A673 (cell line): ENCODE measurements at regions of chr17 and their contacts with region 1.

Region 1: DNA sequence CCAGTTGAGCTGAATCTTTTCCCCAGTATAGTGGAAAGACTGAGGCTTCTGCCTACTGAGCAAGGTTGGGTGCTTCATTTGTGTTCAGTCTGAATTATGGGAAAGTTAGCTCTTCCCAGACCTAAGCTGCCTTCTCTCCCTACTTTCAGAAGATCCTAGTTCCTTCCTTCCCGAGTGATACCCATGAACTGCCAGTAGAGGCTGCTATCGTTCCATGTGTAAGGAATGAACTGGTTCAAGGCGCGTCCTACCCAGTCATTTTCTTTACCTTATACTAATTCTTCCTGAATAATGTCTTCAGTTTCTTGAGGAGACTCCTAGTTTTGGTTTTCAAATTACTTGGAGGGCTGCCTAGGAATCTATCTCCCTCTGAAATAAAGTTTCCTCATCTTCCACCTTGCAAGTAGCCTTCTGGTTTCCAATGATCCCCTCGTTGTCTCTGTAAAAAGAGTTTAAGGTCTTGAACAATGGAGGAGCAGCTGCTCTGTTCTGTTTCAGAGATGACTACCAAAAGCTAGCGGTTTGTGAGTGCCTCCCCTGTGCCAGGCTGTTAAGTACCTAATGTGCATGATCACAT is 934 bp upstream of the AOC2 start:
- DNase-seq: peak; percentile 45
- H3K4me3 ChIP-seq: no peak overlapping the region
- H3K27ac ChIP-seq: no peak overlapping the region
- H3K4me1 ChIP-seq: no peaks in the 10 kb centered on the region
- H3K27me3 ChIP-seq: no peaks in the 10 kb centered on the region
- CTCF ChIP-seq: peak; percentile 66

Region 2: GRCh38 chr17:42766124-42766523 is 77.3 kb before region 1 on chr17:
- CTCF ChIA-PET with region 1: no interaction called
- POLR2A ChIA-PET with region 1: no interaction called
- intact Hi-C with region 1: no loop called
- DNase-seq: no peak
- H3K4me3 ChIP-seq: no peak overlapping the region
- H3K27ac ChIP-seq: no peak overlapping the region
- H3K4me1 ChIP-seq: no peaks in the 10 kb centered on the region
- H3K27me3 ChIP-seq: no peaks in the 10 kb centered on the region
- CTCF ChIP-seq: no peak

Region 3: DNA sequence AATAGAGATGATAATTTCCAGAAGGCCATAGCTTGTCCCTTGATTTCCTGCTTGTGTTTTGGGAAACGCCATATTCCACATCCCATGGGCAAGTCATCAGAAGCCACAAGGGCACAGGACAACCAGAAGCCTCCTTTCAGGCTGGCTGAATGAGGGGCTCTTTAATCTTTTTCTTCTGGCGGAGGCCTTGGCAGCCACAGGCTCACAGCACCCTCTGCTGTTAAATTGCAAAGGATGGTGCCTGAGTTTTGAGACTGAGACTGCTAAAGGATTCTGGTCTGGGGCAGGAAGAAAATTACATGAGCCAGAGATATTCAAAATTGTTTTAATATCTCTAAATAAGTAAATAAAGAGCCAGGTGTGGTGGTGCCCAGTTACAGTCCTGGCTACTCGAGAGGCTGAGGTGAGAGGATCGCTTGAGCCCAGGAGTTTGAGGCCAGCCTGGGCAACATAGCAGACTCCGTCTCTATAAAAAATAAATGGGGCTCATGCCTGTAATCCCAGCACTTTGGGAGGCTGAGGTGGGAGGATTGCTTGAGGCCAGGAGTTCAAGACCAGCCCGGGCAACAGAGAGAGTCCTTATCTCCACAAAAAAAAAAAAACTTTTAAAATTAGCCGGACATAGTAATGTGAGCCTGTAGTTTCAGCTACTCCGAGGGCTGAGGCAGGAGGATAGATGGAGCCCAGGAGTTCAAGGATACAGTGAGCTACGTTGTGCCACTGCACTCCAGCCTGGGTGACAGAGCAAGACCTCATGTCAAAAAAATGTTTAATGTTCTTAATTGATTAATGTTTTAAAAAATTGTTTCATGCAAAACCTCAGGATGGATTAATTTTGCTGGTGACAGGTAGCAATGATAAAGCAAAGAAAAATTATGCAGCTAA is 94.5 kb after region 1 on chr17:
- CTCF ChIA-PET with region 1: no interaction called
- POLR2A ChIA-PET with region 1: no interaction called
- intact Hi-C with region 1: loop called (anchors 2 kb)
- DNase-seq: peak; percentile 58
- H3K4me3 ChIP-seq: no peak overlapping the region
- H3K27ac ChIP-seq: no peak overlapping the region
- H3K4me1 ChIP-seq: no peaks in the 10 kb centered on the region
- H3K27me3 ChIP-seq: no peaks in the 10 kb centered on the region
- CTCF ChIP-seq: peak; percentile 56

Region 4: GRCh38 chr17:44749076-44749979 is 1905.9 kb after region 1 on chr17:
- CTCF ChIA-PET with region 1: no interaction called
- POLR2A ChIA-PET with region 1: no interaction called
- intact Hi-C with region 1: no loop called
- DNase-seq: no peak
- H3K4me3 ChIP-seq: no peak overlapping the region
- H3K27ac ChIP-seq: no peak overlapping the region
- H3K4me1 ChIP-seq: no peaks in the 10 kb centered on the region
- H3K27me3 ChIP-seq: no peaks in the 10 kb centered on the region
- CTCF ChIP-seq: no peak